Activated CD8-positive, alpha-beta memory T cell treated with anti-CD3 and anti-CD28 coated beads, Interleukin-2, amount 10 ng/mL, durations not matched to agents 7 days and 5 days (primary cell): ENCODE measurements at regions of chr20 and their contacts with region 1.

Region 1: DNA sequence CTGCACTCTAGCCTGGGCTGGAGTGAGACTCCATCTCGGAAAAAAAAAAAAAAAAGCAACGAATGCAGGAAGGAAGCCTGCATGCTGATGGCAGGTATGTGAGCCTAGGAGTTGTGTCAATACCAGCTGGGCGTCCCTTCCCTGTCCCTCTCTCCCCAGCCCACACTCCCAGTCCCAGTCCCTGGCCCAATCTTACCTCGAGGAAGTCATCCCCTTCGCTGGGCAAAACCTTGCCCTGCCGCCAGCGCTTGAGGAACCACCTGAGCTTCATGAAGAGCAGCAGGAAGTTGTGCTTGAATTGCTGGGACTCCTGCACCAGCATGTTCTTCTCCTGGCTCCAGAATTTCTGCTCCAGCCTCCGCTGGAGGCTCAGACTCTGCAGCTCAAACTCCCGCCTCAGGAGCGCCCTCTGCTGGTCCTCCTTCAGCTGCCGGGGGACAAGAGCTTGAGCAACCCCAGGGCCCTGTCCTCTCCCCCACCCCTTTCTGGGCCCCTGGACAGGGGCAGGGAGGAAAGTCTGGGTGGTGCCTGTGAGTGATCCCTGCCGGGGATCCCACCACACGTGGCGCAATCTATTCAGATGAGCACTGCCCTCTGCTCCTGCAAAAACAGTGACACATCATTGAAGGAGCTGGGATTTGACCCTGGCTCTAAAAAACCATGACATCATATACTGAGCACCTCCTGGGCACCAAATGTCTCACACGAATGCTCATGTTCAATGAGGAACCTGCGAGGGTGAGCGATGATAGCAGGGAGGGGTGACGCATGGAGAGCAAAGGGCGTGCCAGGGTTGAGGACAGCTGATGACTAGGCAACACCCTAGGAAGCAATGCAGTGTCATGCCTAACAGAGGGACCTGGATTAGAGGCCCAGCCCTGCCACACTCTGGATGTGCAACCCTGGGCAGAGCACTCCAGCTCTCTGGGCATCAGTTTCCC is 35.0 kb upstream of the DSN1 start:
- DNase-seq: peak; percentile 81
- ATAC-seq: peak; percentile 84
- H3K4me3 Mint-ChIP-seq: no peak overlapping the region
- H3K27ac Mint-ChIP-seq: no peak overlapping the region
- H3K4me1 Mint-ChIP-seq: peaks cover 4% of the 10 kb centered on the region
- H3K27me3 Mint-ChIP-seq: no peaks in the 10 kb centered on the region

Region 2: GRCh38 chr20:36666181-36666740 is 142.3 kb before region 1 on chr20:
- CTCF ChIA-PET with region 1: interaction called, 17 read pairs
- DNase-seq: no peak
- ATAC-seq: peak; percentile 51
- H3K4me3 Mint-ChIP-seq: no peak overlapping the region
- H3K27ac Mint-ChIP-seq: no peak overlapping the region
- H3K4me1 Mint-ChIP-seq: no peaks in the 10 kb centered on the region
- H3K27me3 Mint-ChIP-seq: no peaks in the 10 kb centered on the region

Region 3: GRCh38 chr20:36773597-36774390 is 34.8 kb before region 1 on chr20 and contains the start of gene DSN1:
- CTCF ChIA-PET with region 1: interaction called, 10 read pairs
- DNase-seq: peak; percentile 99
- ATAC-seq: peak; percentile 94
- H3K4me3 Mint-ChIP-seq: peak within 1 kb of the TSS; percentile 86
- H3K27ac Mint-ChIP-seq: peak within 1 kb of the TSS; percentile 95
- H3K4me1 Mint-ChIP-seq: peaks cover 37% of the 10 kb centered on the region
- H3K27me3 Mint-ChIP-seq: no peaks in the 10 kb centered on the region
- total RNA-seq, gene DSN1: 36.0 to 42.7 TPM

Region 4: GRCh38 chr20:36821964-36822437 is 13.4 kb after region 1 on chr20:
- CTCF ChIA-PET with region 1: interaction called, 16 read pairs
- DNase-seq: no peak
- ATAC-seq: no peak
- H3K4me3 Mint-ChIP-seq: no peak overlapping the region
- H3K27ac Mint-ChIP-seq: no peak overlapping the region
- H3K4me1 Mint-ChIP-seq: peaks cover 3% of the 10 kb centered on the region
- H3K27me3 Mint-ChIP-seq: no peaks in the 10 kb centered on the region

Region 5: GRCh38 chr20:36835453-36836198 is 27.0 kb after region 1 on chr20:
- CTCF ChIA-PET with region 1: interaction called, 23 read pairs
- DNase-seq: peak; percentile 94
- ATAC-seq: peak; percentile 97
- H3K4me3 Mint-ChIP-seq: peak overlapping the region; percentile 79
- H3K27ac Mint-ChIP-seq: peak overlapping the region; percentile 93
- H3K4me1 Mint-ChIP-seq: peaks cover 22% of the 10 kb centered on the region
- H3K27me3 Mint-ChIP-seq: no peaks in the 10 kb centered on the region

Region 6: DNA sequence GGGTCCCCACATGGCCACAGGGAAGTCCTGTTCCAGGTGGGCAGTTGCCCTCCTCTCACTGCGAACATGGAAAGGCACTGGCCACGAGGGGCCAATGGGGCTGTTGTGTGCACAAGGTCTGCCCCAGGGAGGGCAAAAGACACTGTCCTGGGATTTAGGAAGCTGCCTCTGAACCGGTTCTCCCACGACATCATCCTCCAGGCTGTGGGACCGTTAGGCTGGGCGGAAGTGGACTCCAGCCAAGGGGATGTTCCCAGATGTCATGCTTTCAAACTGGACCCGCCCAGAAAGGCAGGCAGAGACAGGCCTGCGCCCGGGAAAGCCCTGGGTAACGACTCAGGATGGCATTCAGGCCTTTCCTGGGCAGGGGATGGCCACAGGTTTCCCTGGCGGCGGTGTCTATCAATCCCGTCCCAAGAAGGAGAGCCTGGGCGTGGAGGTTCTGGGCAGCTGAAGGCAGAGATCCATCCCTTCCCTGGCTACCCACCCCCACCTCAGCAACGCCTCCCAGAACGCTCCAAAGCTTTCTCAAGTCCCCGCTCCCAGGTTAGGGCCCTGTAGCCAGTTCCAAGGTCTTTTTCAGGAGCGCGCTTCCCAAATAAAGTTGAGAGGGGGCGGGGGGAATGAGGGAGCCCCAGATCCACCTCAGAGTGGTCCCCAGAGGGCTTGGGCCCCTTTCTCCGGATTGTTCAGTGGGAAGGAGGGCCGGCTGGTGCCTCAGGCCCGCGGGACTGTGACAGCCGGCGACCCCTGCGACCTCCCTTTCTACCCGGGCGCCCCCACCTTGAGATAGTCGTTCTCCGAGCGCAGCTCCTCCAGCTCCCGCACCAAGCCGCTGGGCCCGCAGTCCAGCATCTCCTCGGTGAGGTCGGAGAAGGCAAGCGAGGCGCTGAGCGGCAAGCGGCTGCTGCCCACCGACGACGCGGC is 53.6 kb after region 1 on chr20:
- CTCF ChIA-PET with region 1: interaction called, 17 read pairs
- DNase-seq: no peak
- ATAC-seq: no peak
- H3K4me3 Mint-ChIP-seq: no peak overlapping the region
- H3K27ac Mint-ChIP-seq: no peak overlapping the region
- H3K4me1 Mint-ChIP-seq: peaks cover 8% of the 10 kb centered on the region
- H3K27me3 Mint-ChIP-seq: peaks cover 25% of the 10 kb centered on the region

Region 7: GRCh38 chr20:36886859-36887751 is 78.5 kb after region 1 on chr20:
- CTCF ChIA-PET with region 1: interaction called, 10 read pairs
- DNase-seq: peak; percentile 85
- ATAC-seq: peak; percentile 90
- H3K4me3 Mint-ChIP-seq: no peak overlapping the region
- H3K27ac Mint-ChIP-seq: no peak overlapping the region
- H3K4me1 Mint-ChIP-seq: peaks cover 11% of the 10 kb centered on the region
- H3K27me3 Mint-ChIP-seq: no peaks in the 10 kb centered on the region